ENCODE measurements at regions of chr18 and their contacts with region 1.

Region 1: GRCh38 chr18:3447895-3448837 is 1.8 kb upstream of the TGIF1 start:
- DNase-seq: peak; percentile 99
- H3K4me3 ChIP-seq: peak overlapping the region; percentile 59 to 90 (median 81)
- H3K27ac ChIP-seq: peak overlapping the region; percentile 99
- H3K4me1 ChIP-seq: peaks cover 21% of the 10 kb centered on the region
- H3K27me3 ChIP-seq: no peaks in the 10 kb centered on the region
- CTCF ChIP-seq: peak in 1 of 2 donors; percentile 13
- POLR2A ChIP-seq: peak; percentile 80

Region 2: DNA sequence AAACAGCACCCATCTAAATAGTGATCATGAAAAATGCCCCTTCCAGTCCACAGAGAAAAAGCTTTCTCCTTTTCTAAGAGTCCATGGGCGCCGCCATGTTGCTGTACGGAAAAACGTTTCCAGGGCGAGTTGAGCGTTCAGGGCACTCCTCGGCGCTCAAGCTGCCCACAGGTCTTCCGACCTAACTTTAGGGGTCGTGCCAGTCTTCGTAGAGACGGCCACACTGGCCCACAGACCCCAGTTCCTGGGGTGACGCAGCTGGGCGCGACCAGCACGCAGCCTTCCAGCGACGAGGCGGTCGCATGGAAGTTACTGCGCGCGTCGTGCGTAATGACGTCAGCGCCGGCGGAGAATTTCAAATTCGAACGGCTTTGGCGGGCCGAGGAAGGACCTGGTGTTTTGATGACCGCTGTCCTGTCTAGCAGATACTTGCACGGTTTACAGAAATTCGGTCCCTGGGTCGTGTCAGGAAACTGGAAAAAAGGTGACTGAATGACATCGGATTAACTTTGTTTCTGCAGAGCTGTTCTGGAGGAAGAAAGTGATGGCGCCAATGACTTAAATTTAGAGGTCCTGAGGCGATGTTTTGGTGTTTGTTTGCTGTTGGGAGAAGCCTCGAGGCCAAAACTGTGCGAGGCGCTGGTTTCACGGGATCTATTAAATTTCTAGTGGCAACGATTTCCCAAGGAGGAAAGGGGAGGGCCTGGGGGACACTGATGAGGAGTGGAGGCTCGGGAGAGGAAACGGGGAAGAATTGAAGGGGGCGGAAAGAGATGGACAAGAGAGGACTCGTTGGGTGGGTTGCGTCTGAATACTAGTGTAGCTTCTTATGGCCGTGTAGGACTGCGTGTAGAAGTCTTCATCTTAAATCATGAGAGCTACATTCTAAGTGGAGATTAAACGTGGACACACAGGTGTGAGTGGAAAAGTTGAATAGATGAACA is 876.7 kb before region 1 on chr18 and contains the starts of genes METTL4 and NDC80:
- CTCF ChIA-PET with region 1: no interaction called
- POLR2A ChIA-PET with region 1: no interaction called
- dilution Hi-C with region 1: no loop called
- intact Hi-C with region 1: loop called (anchors 5 kb)
- DNase-seq: peak; percentile 96
- H3K4me3 ChIP-seq: peak within 1 kb of the TSS; percentile 80 to 92 (median 89)
- H3K27ac ChIP-seq: peak within 1 kb of the TSS; percentile 92
- H3K4me1 ChIP-seq: peaks cover 32% of the 10 kb centered on the region
- H3K27me3 ChIP-seq: no peaks in the 10 kb centered on the region
- CTCF ChIP-seq: no peak
- POLR2A ChIP-seq: no peak
- total RNA-seq, gene METTL4: 16.1 and 17.4 TPM in 2 replicates
- total RNA-seq, gene NDC80: 39.6 and 43.2 TPM in 2 replicates

Region 3: DNA sequence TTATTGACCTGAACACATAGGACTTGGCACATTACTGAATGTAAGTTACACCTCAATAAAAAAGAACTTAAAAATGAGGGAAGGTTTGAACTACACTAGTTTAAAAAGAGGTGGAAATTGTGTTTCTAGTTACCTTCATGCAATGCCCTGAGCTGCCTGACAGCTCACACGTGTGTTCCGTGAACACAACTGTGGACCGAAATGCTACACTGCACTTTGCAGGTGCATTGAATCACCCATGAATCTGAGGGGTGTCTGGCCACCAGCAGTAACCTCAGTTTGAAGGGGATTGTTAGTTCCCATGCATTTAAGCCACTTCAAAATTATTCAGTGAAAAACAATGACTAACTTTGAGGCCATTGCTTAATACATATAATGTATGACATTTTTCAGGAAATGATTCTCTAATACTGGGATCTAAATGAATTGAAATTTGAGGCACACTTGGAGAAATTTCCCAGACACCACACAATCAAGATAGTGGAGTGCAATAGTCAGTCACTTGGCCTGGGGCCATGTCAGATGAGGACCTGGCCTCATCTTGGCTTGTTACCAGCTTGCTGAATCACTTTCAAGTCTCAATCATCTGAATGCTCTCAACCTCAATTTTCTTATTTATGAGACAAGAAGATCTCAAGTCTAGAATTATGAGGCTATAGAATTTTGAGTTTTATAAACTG is 126.9 kb before region 1 on chr18:
- CTCF ChIA-PET with region 1: interaction called, 6 read pairs
- POLR2A ChIA-PET with region 1: no interaction called
- dilution Hi-C with region 1: no loop called
- intact Hi-C with region 1: loop called (anchors 1 kb)
- DNase-seq: peak; percentile 94
- H3K4me3 ChIP-seq: no peak overlapping the region
- H3K27ac ChIP-seq: peak overlapping the region; percentile 49
- H3K4me1 ChIP-seq: peaks cover 33% of the 10 kb centered on the region
- H3K27me3 ChIP-seq: no peaks in the 10 kb centered on the region
- CTCF ChIP-seq: no peak
- POLR2A ChIP-seq: no peak

Region 4: GRCh38 chr18:3593904-3594661 is 145.9 kb after region 1 on chr18:
- CTCF ChIA-PET with region 1: interaction called, 59 read pairs
- POLR2A ChIA-PET with region 1: interaction called, 12 read pairs
- dilution Hi-C with region 1: no loop called
- intact Hi-C with region 1: loop called (anchors 1 kb)
- DNase-seq: peak; percentile 98
- H3K4me3 ChIP-seq: peak overlapping the region; percentile 8 to 93 (median 48)
- H3K27ac ChIP-seq: peak overlapping the region; percentile 100
- H3K4me1 ChIP-seq: peaks cover 48% of the 10 kb centered on the region
- H3K27me3 ChIP-seq: no peaks in the 10 kb centered on the region
- CTCF ChIP-seq: peak; percentile 62 to 80
- POLR2A ChIP-seq: peak; percentile 81

Region 5: DNA sequence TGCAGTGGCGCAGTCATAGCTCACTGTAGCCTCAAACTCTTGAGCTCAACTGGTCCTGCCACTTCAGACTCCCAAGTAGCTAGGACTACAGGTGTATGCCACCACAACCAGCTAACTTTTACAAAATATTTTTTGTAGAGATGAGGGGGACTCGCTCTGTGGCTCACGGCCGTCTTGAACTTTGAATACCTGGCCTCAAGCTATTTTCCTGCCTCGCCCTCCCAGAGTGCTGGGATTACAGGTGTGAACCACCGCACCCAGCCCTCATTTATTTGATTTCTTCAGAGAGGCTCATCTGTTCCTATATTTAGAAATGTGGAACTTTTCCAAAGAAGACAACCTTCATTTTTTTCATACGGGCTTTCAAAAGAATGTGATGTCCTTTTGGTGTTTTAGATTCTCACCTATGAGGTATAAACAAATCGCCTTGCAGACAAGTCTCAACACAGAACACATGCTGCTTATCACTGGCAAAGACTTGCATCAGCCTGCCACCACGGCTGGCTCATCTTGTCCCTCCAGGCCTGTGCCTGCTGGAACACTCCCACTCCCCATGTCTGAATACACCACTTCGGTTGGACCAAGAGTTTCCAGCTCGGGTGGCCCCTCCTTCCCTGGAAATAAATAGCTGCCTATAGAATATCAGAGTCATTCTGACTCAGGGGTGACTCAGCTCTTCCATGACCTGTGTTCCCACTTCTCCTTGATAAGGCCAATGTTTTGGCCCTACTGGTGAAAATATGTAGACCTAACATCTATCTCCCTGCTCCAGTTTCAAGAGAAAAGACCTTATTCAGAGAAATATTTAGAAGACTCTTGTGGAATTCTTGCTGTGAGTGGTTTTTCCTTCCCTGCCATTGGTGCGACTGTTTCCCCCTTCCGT is 204.5 kb after region 1 on chr18:
- CTCF ChIA-PET with region 1: interaction called, 4 read pairs
- POLR2A ChIA-PET with region 1: no interaction called
- dilution Hi-C with region 1: no loop called
- intact Hi-C with region 1: loop called (anchors 2 kb)
- DNase-seq: peak; percentile 97
- H3K4me3 ChIP-seq: peak overlapping the region in 1 of 3 experiments; percentile 42
- H3K27ac ChIP-seq: peak overlapping the region; percentile 83
- H3K4me1 ChIP-seq: peaks cover 46% of the 10 kb centered on the region
- H3K27me3 ChIP-seq: no peaks in the 10 kb centered on the region
- CTCF ChIP-seq: peak in 1 of 2 donors; percentile 4
- POLR2A ChIP-seq: no peak

Region 6: DNA sequence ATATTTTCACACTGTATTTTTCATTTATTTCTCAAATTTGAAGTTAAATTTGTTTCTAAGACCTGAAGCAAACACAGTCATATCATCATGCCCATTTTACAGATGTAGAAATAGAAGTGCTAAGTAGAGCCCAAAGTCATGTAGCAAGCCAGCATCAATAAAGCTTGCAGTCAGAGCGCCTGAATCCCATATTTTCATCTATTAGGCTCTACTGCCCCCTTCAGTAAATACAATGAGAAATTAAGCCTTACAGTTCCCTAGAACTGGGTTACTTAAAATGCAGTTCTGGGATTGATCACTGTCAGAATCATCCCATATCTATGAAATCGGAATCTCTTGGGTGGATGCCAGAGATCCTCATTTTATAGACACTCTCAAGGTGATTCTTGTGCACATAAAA is 421.7 kb after region 1 on chr18:
- CTCF ChIA-PET with region 1: interaction called, 4 read pairs
- POLR2A ChIA-PET with region 1: no interaction called
- dilution Hi-C with region 1: no loop called
- intact Hi-C with region 1: loop called (anchors 5 kb)
- DNase-seq: peak; percentile 68
- H3K4me3 ChIP-seq: no peak overlapping the region
- H3K27ac ChIP-seq: no peak overlapping the region
- H3K4me1 ChIP-seq: no peaks in the 10 kb centered on the region
- H3K27me3 ChIP-seq: peaks cover 0 to 14% of the 10 kb centered on the region in 2 experiments
- CTCF ChIP-seq: peak; percentile 28 to 39
- POLR2A ChIP-seq: no peak